ENCODE measurements at regions of chr17 and their contacts with region 1.

Region 1: GRCh38 chr17:59853168-59853918 is 39.4 kb downstream of the TUBD1 start:
- DNase-seq: peak; percentile 99
- ATAC-seq: peak; percentile 83
- H3K4me3 ChIP-seq: peak overlapping the region in 1 of 3 experiments; percentile 20; a peak in 1 of 6 replicates
- H3K27ac ChIP-seq: peak overlapping the region; percentile 94
- H3K4me1 ChIP-seq: peaks cover 95% of the 10 kb centered on the region
- H3K27me3 ChIP-seq: no peaks in the 10 kb centered on the region
- CTCF ChIP-seq: peak; percentile 95
- EP300 ChIP-seq: peak; percentile 66 to 94; a peak in 3 of 4 replicates
- POLR2A ChIP-seq: peak in 1 of 2 experiments; percentile 42; a peak in 2 of 4 replicates
- RAD21 ChIP-seq: peak; percentile 87

Region 2: GRCh38 chr17:59716427-59716826 is 136.9 kb before region 1 on chr17:
- CTCF ChIA-PET with region 1: no interaction called
- POLR2A ChIA-PET with region 1: no interaction called
- in situ Hi-C with region 1: no loop called
- intact Hi-C with region 1: no loop called
- DNase-seq: no peak
- ATAC-seq: no peak
- H3K4me3 ChIP-seq: no peak overlapping the region
- H3K27ac ChIP-seq: no peak overlapping the region
- H3K4me1 ChIP-seq: peaks cover 59% of the 10 kb centered on the region
- H3K27me3 ChIP-seq: no peaks in the 10 kb centered on the region
- CTCF ChIP-seq: no peak
- EP300 ChIP-seq: no peak
- POLR2A ChIP-seq: no peak
- RAD21 ChIP-seq: no peak

Region 3: DNA sequence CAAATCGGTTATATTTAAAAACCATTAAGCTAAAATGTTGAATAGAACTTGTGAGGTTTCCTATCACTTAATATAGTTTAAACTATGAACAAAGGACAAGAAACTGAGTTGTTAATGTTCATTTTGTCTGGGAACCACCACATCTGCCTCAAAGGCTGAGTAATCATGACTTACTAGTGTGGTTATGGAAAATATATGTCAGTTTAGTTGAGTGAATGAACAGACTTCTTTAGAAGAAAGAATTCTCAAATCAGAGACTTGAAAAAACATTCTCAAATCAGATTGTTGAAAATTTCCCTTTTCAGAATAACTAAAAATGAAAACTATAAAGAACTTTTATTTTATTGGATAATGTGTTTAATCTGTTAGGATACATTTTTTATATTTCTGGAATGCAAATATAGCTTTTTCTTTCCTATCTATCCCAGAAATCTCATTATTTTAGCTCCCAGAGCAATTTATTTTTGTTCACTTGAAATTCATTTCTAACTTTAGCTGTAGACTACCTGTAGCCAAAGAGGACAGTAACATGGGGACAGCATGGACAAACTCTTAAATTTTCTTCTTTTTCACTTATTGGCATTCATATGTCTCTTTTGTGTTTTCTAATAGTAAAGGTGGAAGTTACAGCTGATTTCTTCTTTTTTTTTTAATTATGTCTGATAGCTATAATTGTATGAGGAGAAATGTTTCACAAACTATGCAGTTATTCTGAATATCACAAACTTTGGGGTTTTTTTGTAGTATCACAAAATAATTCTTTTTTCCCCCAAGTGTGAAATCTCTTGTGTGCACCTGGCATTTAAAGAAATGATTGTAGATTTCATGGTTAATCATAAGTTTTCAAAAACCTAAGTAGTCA is 90.6 kb before region 1 on chr17:
- CTCF ChIA-PET with region 1: no interaction called
- POLR2A ChIA-PET with region 1: interaction called, 12 read pairs
- in situ Hi-C with region 1: no loop called
- intact Hi-C with region 1: no loop called
- DNase-seq: no peak
- ATAC-seq: no peak
- H3K4me3 ChIP-seq: no peak overlapping the region
- H3K27ac ChIP-seq: peak overlapping the region; percentile 76
- H3K4me1 ChIP-seq: peaks cover 37% of the 10 kb centered on the region
- H3K27me3 ChIP-seq: no peaks in the 10 kb centered on the region
- CTCF ChIP-seq: no peak
- EP300 ChIP-seq: no peak
- POLR2A ChIP-seq: no peak
- RAD21 ChIP-seq: no peak

Region 4: DNA sequence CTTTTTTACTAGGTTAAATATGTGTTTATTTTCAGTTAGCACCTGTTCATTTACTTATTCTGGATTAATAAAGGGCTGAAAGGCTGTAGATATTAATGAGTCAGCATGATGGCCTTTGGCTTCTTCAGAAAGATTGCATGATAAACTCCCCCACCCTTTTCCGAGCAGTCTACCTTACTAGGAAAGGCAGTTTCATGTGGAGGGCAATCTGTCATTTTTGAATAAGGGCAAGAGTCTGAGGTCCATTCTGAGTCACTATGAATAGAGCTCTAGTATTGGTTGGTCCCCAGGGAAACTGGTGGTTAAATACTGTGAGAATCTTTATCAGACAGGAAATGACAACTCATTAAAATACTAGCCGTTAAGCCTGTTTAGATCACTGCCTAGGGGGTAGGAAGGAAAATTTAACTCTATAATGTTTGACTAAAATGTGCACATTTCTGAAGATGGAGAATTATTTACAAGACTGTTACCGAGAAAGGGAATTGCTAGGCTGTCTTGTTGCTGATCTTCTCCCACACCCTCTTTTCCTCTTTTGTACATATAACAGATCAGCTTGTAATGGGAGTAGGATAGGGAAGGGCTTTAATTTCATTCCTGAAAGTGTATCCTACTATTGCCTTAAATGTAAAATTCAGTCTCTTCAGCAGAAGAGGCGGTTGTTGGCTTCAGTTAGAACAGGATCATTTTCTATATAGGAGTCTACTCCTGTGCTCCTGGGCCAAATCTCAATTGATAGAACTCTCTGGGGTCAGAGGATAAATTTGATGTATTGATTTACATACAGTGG is 23.9 kb before region 1 on chr17:
- CTCF ChIA-PET with region 1: no interaction called
- POLR2A ChIA-PET with region 1: interaction called, 18 read pairs
- in situ Hi-C with region 1: no loop called
- intact Hi-C with region 1: no loop called
- DNase-seq: peak; percentile 97
- ATAC-seq: peak; percentile 94
- H3K4me3 ChIP-seq: peak overlapping the region in 1 of 3 experiments; percentile 26; a peak in 1 of 6 replicates
- H3K27ac ChIP-seq: peak overlapping the region; percentile 90
- H3K4me1 ChIP-seq: peaks cover 84% of the 10 kb centered on the region
- H3K27me3 ChIP-seq: no peaks in the 10 kb centered on the region
- CTCF ChIP-seq: no peak
- EP300 ChIP-seq: peak; percentile 51 to 61; a peak in 2 of 4 replicates
- POLR2A ChIP-seq: 0 out of 4 replicates have a peak, but pooled peaks of 1 of the 2 experiments have one; percentile 20
- RAD21 ChIP-seq: no peak; the same call in 1 of the 2 replicates

Region 5: GRCh38 chr17:59863606-59864005 is 10.3 kb after region 1 on chr17:
- CTCF ChIA-PET with region 1: no interaction called
- POLR2A ChIA-PET with region 1: no interaction called
- in situ Hi-C with region 1: no loop called
- intact Hi-C with region 1: no loop called
- DNase-seq: no peak
- ATAC-seq: no peak
- H3K4me3 ChIP-seq: no peak overlapping the region
- H3K27ac ChIP-seq: no peak overlapping the region
- H3K4me1 ChIP-seq: peaks cover 13% of the 10 kb centered on the region
- H3K27me3 ChIP-seq: no peaks in the 10 kb centered on the region
- CTCF ChIP-seq: no peak
- EP300 ChIP-seq: no peak
- POLR2A ChIP-seq: no peak
- RAD21 ChIP-seq: no peak

Region 6: DNA sequence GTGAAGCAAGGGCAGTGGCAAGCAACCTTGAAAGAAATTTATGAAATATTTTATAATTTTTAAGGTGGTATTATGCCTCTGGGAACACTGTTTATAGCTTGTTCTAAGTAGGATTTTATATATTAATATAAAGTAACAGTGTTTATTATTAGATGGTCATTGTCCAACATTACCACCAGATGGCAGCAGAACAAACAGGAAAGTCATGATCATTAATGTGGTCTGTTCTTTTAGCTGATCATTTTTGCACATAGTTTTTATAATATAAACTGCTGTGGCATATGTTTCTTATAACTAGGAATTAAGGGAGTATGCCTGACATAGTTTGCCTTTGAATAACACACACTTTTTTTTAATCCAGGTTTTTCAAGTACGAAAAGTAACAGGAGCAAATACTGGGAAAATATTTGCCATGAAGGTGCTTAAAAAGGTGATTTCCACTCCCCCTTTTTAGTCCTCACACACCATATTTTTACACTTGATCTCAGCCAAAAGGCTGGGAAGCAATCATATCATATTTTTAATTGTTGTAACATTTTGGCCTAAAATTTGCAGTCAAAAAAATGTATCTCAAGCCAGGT is 61.0 kb after region 1 on chr17:
- CTCF ChIA-PET with region 1: no interaction called
- POLR2A ChIA-PET with region 1: no interaction called
- in situ Hi-C with region 1: no loop called
- intact Hi-C with region 1: no loop called
- DNase-seq: peak; percentile 51
- ATAC-seq: peak; percentile 47; the same call in 2 of the 3 replicates
- H3K4me3 ChIP-seq: no peak overlapping the region
- H3K27ac ChIP-seq: no peak overlapping the region
- H3K4me1 ChIP-seq: no peaks in the 10 kb centered on the region
- H3K27me3 ChIP-seq: no peaks in the 10 kb centered on the region; a peak in 1 of 5 replicates
- CTCF ChIP-seq: peak; percentile 56
- EP300 ChIP-seq: no peak
- POLR2A ChIP-seq: no peak
- RAD21 ChIP-seq: no peak

Measured in HepG2 (cell line).